ENCODE measurements at regions of chr10 and their contacts with region 1.

Region 1: GRCh38 chr10:74738985-74739567 is 87.3 kb upstream of the KAT6B start:
- DNase-seq: peak; percentile 84
- ATAC-seq: peak; percentile 88
- H3K4me3 Mint-ChIP-seq: peak overlapping the region; percentile 69
- H3K27ac Mint-ChIP-seq: peak overlapping the region; percentile 97
- H3K4me1 Mint-ChIP-seq: peaks cover 34% of the 10 kb centered on the region
- H3K27me3 Mint-ChIP-seq: no peaks in the 10 kb centered on the region

Region 2: GRCh38 chr10:74419958-74420375 is 319.1 kb before region 1 on chr10:
- CTCF ChIA-PET with region 1: interaction called, 24 read pairs
- POLR2A ChIA-PET with region 1: no interaction called
- DNase-seq: peak; percentile 54
- ATAC-seq: no peak
- H3K4me3 Mint-ChIP-seq: no peak overlapping the region
- H3K27ac Mint-ChIP-seq: no peak overlapping the region
- H3K4me1 Mint-ChIP-seq: peaks cover 11% of the 10 kb centered on the region
- H3K27me3 Mint-ChIP-seq: no peaks in the 10 kb centered on the region

Region 3: DNA sequence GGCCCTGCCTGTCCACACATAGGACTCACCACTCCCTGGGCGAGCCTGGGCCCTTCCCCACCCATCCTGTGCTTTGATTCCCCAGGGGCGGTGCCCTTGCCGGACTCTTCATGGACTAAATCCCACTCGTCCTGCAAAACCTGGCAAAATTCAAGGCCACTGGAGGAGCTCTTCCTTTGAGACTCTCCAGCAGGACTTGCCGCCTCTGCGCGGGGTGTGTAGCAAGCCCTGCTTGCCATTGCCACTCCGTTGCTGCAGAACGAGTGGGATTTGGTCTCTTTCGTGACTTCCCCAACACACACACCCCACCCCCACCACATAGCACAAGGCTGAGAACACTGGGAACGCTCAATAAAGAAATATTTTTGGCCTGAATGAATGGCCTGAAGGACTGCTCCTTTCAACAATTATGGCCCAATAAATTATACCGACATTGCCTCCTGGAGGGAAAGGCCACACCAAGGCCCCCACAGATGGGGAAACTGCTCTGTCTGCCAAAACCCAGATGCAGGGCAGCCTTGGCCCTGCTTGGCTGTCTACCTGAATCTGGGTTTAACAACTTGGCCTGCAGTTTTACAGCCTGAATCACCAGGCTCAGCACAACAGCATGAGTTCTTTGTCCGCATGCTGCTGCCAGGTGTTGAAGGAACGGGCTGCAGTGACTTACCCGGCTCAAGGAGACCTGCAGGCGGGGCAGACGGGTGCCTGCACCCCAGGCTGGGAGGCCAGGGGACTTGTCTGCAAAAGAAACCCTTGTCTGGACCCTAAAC is 14.6 kb after region 1 on chr10:
- CTCF ChIA-PET with region 1: interaction called, 27 read pairs
- POLR2A ChIA-PET with region 1: interaction called, 3 read pairs
- DNase-seq: no peak
- ATAC-seq: no peak
- H3K4me3 Mint-ChIP-seq: no peak overlapping the region
- H3K27ac Mint-ChIP-seq: peak overlapping the region; percentile 83
- H3K4me1 Mint-ChIP-seq: peaks cover 43% of the 10 kb centered on the region
- H3K27me3 Mint-ChIP-seq: no peaks in the 10 kb centered on the region

Region 4: DNA sequence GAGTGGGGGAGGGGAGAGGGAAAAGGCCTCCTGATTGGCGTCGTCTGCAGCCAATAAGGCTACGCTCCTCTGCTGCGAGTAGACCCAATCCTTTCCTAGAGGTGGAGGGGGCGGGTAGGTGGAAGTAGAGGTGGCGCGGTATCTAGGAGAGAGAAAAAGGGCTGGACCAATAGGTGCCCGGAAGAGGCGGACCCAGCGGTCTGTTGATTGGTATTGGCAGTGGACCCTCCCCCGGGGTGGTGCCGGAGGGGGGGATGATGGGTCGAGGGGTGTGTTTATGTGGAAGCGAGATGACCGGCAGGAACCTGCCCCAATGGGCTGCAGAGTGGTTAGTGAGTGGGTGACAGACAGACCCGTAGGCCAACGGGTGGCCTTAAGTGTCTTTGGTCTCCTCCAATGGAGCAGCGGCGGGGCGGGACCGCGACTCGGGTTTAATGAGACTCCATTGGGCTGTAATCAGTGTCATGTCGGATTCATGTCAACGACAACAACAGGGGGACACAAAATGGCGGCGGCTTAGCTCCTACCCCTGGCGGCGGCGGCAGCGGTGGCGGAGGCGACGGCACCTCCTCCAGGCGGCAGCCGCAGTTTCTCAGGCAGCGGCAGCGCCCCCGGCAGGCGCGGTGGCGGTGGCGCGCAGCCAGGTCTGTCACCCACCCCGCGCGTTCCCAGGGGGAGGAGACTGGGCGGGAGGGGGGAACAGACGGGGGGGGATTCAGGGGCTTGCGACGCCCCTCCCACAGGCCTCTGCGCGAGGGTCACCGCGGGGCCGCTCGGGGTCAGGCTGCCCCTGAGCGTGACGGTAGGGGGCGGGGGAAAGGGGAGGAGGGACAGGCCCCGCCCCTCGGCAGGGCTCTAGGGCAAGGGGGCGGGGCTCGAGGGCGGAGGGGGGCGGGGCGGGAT is 87.3 kb after region 1 on chr10 and contains the start of gene KAT6B:
- CTCF ChIA-PET with region 1: interaction called, 22 read pairs
- POLR2A ChIA-PET with region 1: interaction called, 5 read pairs
- DNase-seq: peak; percentile 100
- ATAC-seq: peak; percentile 91
- H3K4me3 Mint-ChIP-seq: peak within 1 kb of the TSS; percentile 86
- H3K27ac Mint-ChIP-seq: peak within 1 kb of the TSS; percentile 97
- H3K4me1 Mint-ChIP-seq: peaks cover 56% of the 10 kb centered on the region
- H3K27me3 Mint-ChIP-seq: no peaks in the 10 kb centered on the region
- total RNA-seq, gene KAT6B: 40.3 to 43.1 TPM

Region 5: DNA sequence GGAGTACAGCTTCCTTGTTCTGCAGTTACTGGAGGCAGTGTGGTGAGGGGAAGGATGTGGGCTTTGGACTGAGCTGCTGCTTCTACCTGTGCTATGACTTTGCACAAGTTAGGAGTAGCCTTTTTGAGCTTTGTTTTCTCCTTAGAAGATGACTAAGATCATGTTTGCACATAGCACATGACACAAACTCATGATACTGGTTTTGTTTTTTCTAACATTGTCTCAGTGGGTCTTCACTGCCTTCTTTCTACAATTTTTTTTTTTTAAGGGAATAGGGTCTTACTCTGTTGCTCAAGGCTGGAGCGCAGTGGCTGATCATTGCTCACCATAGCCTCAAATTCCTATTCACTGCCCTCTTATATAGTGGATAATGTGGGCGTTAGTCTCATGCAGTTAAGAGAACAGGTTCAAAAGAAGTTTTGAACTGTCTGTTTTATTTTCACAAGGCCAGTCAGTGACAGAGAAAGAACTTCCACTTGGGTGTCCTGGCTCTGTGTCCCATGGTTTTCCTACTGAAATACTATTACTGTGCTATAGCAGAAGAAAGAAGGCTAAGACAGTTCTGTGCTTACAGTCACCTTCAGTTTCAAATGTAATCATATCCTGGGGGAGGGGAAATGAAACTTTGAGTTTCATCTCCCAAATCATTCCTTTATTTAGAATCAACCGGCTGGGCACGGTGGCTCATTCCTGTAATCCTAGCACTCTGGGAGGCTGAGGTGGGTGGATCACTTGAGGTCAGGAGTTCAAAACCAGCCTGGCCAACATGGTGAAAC is 159.3 kb after region 1 on chr10:
- CTCF ChIA-PET with region 1: interaction called, 11 read pairs
- POLR2A ChIA-PET with region 1: interaction called, 5 read pairs
- DNase-seq: peak; percentile 59
- ATAC-seq: peak; percentile 70
- H3K4me3 Mint-ChIP-seq: peak overlapping the region; percentile 46
- H3K27ac Mint-ChIP-seq: peak overlapping the region; percentile 75
- H3K4me1 Mint-ChIP-seq: peaks cover 42% of the 10 kb centered on the region
- H3K27me3 Mint-ChIP-seq: no peaks in the 10 kb centered on the region